Endothelial cell of umbilical vein (primary cell): ENCODE measurements at regions of chr17 and their contacts with region 1.

Region 1: DNA sequence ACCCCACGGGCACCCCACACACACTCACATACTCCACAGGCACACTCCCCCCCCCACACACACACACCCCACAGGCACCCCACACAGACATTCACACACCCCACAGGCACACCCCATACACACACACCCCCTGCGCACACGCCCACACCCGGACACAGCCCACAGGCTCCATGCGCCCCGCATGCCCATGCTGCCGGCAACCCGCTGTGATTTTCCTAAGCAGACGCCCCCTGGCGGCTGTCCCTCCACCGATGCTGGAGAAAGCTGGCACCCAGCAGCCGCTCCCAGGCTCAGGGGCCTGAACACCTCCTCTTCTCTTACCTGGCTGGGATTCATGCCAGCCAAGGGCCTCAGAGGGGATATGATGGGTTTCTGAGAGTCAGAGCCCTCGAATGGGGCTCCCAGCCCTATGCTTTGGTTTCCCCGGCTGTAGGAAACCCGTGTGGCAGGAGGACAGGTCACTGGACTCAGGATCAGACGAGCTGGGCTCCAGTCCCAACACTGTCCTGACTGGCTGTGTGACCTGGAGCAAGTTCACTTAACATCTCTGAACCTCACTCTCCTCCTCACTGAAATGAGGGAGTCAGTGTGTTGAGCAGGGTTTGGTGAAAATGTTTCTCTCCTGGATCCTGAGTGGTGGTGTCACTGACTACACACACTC is 19.6 kb upstream of the TNFRSF13B start:
- DNase-seq: peak; percentile 33
- H3K4me3 ChIP-seq: no peak overlapping the region
- H3K27ac ChIP-seq: no peak overlapping the region
- H3K4me1 ChIP-seq: no peaks in the 10 kb centered on the region
- H3K27me3 ChIP-seq: peaks cover 3 to 12% of the 10 kb centered on the region in 2 experiments
- CTCF ChIP-seq: peak; percentile 84 to 91
- POLR2A ChIP-seq: no peak

Region 2: DNA sequence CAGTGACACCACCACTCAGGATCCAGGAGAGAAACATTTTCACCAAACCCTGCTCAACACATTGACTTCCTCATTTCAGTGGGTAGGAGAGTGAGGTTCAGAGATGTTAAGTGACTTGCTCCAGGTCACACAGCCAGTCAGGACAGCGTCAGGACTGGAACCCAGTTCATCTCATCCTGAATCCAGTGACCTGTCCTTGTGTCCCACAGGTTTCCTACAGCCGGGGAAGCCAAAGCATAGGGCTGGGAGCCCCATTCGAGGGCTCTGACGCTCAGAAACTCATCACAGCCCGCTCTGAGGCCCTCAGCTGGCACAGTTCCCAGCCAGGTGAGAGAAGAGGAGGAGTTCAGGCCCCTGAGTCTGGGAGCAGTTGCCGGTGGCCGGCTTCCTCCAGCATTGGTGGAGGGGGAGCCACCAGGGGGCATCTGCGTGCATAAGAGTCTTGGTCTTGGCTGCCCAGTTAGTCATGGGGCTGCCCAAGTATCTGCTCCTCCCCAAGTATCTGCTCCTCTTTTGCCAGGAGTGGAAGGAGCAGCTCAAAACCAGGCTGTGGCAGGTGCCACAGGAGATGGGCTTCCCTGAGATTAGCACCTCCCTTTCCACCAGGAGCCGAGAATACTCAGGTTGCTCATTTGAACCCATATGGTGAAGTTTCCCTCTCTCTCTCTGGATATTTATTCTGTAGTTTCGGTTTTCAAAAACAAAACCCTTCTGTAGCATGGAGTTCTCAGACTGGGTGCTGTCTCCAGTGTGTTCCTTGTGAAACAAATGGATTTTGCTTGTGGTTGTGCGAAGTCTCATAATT is 75.5 kb before region 1 on chr17:
- CTCF ChIA-PET with region 1: interaction called, 30 read pairs
- POLR2A ChIA-PET with region 1: no interaction called
- dilution Hi-C with region 1: no loop called
- intact Hi-C with region 1: loop called (anchors 1 kb)
- DNase-seq: peak; percentile 17
- H3K4me3 ChIP-seq: no peak overlapping the region
- H3K27ac ChIP-seq: no peak overlapping the region
- H3K4me1 ChIP-seq: no peaks in the 10 kb centered on the region
- H3K27me3 ChIP-seq: peaks cover 2 to 6% of the 10 kb centered on the region in 2 experiments
- CTCF ChIP-seq: peak; percentile 49 to 71
- POLR2A ChIP-seq: no peak

Region 3: DNA sequence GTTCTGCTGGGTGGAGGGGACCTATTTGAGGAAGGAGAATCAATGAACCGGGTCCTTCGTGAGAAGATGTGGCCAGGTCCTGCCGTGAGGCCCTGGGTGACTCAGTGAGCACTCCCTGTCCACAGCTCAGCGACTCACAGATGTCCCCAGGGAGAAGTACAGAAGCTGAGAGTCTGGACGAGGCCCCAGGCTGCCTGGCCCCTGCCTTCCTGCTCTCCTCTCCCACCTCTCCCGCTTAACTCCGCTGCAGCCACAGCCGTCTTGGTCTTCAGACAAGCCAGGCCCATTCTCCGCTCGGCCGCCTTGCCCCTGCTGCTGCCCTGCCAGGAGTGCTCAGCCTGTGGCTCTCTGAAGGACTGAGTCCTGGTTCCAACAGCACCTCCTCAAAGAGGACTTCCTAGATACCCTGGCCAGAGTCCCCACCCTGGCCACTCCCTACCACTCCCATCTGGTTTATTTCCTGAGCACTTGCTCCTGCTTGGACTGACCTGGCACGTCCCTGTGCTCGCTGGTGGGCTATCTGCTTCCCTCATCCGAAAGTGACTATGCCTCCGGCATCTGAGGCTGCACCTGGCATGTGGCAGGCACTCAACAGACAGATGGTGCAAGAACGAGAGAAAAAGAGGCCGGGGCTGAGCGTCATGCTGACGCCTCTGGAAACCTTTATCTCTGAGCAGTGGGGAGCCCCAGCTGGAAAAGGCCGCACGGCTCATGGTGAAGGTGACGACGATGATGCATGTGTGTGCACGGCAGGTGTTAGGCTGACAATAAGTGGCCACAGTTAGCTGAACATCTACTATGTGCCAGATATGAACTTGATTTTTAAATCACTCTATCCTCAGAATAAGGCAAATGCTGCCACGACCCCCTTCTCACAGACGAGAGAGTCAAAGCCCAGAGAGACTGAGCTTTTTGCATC is 10.4 kb before region 1 on chr17:
- CTCF ChIA-PET with region 1: interaction called, 100 read pairs
- POLR2A ChIA-PET with region 1: no interaction called
- dilution Hi-C with region 1: no loop called
- intact Hi-C with region 1: no loop called
- DNase-seq: no peak
- H3K4me3 ChIP-seq: no peak overlapping the region
- H3K27ac ChIP-seq: no peak overlapping the region
- H3K4me1 ChIP-seq: no peaks in the 10 kb centered on the region
- H3K27me3 ChIP-seq: peaks cover 4 to 12% of the 10 kb centered on the region in 2 experiments
- CTCF ChIP-seq: no peak
- POLR2A ChIP-seq: no peak